PC-3 (cell line): ENCODE measurements at regions of chr3 and their contacts with region 1.

Region 1: GRCh38 chr3:183385698-183386613 is 42.5 kb downstream of the MCF2L2 start:
- DNase-seq: peak; percentile 86
- ATAC-seq: peak; percentile 73
- H3K4me3 ChIP-seq: no peak overlapping the region
- H3K27ac ChIP-seq: no peak overlapping the region
- H3K4me1 ChIP-seq: peaks cover 24% of the 10 kb centered on the region
- H3K27me3 ChIP-seq: no peaks in the 10 kb centered on the region
- CTCF ChIP-seq: peak; percentile 91

Region 2: GRCh38 chr3:182713743-182714517 is 672.0 kb before region 1 on chr3:
- CTCF ChIA-PET with region 1: no interaction called
- POLR2A ChIA-PET with region 1: no interaction called
- intact Hi-C with region 1: loop called (anchors 1 kb)
- DNase-seq: peak; percentile 81
- ATAC-seq: peak; percentile 72
- H3K4me3 ChIP-seq: no peak overlapping the region
- H3K27ac ChIP-seq: no peak overlapping the region
- H3K4me1 ChIP-seq: 0 out of 2 replicates have a peak, but pooled peaks cover 3% of the 10 kb centered on the region
- H3K27me3 ChIP-seq: no peaks in the 10 kb centered on the region
- CTCF ChIP-seq: peak; percentile 74

Region 3: DNA sequence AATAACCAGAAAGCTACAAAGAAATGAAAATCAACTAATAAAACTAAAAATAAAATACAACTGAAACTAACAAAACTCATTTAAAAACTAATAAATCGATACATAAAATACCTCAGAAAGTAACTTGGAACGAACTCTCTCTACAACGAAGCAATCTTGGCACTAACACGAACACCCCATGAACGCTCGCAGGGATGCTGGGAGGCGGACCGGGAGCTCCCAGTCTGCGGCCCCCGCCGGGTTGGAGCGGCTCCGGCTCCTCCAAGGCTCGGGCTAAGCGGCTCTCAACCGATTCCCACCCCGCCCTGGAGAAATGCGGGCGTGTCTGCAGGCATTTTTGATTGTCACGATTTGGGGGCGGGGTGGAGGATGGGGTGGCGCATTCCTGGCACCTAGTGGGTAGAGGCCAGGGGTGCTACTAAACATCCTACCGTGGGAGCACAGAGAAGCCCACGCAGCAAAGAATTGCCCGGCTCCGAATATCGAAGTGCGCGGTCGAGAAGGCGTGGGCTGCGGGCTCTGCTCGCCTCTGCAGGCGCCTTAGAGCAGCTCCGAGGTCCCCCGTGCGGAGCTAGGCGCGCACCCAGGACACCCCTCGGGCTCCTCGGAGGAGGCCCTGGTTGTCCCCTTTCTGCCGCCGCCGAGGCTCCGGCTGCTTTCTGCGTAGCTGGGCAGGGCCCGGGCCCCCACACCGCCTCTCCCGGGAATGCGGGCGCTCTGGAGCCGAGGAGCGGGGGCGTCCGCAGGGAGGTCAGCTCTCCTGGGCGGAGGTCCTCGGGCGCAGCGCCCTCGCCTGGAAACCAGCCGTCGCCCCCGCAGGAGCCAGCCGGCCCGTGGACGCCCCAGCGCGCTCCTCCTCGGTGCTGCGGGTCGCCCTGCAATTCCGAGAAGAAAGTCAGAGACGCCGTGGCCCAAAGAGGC is 207.1 kb before region 1 on chr3:
- CTCF ChIA-PET with region 1: interaction called, 55 read pairs
- POLR2A ChIA-PET with region 1: no interaction called
- intact Hi-C with region 1: loop called (anchors 1 kb)
- DNase-seq: peak; percentile 70
- ATAC-seq: peak; percentile 61
- H3K4me3 ChIP-seq: peak overlapping the region; percentile 85
- H3K27ac ChIP-seq: no peak overlapping the region
- H3K4me1 ChIP-seq: peaks cover 17% of the 10 kb centered on the region; the same call in 1 of the 2 replicates
- H3K27me3 ChIP-seq: no peaks in the 10 kb centered on the region
- CTCF ChIP-seq: peak; percentile 60

Region 4: GRCh38 chr3:183252973-183253901 is 132.7 kb before region 1 on chr3 and contains the start of gene B3GNT5:
- CTCF ChIA-PET with region 1: no interaction called
- POLR2A ChIA-PET with region 1: interaction called, 3 read pairs
- intact Hi-C with region 1: loop called (anchors 1 kb)
- DNase-seq: peak; percentile 75
- ATAC-seq: peak; percentile 53
- H3K4me3 ChIP-seq: peak within 1 kb of the TSS; percentile 89
- H3K27ac ChIP-seq: peak within 1 kb of the TSS; percentile 88
- H3K4me1 ChIP-seq: peaks cover 34% of the 10 kb centered on the region
- H3K27me3 ChIP-seq: no peaks in the 10 kb centered on the region
- CTCF ChIP-seq: no peak
- total RNA-seq, gene B3GNT5: 22.9 and 29.2 TPM in 2 replicates

Region 5: GRCh38 chr3:183447206-183448001 is 61.4 kb after region 1 on chr3:
- CTCF ChIA-PET with region 1: no interaction called
- POLR2A ChIA-PET with region 1: no interaction called
- intact Hi-C with region 1: no loop called
- DNase-seq: peak; percentile 90
- ATAC-seq: peak; percentile 88
- H3K4me3 ChIP-seq: peak overlapping the region; percentile 99
- H3K27ac ChIP-seq: no peak overlapping the region
- H3K4me1 ChIP-seq: peaks cover 15% of the 10 kb centered on the region
- H3K27me3 ChIP-seq: no peaks in the 10 kb centered on the region
- CTCF ChIP-seq: peak; percentile 28; the same call in 1 of the 2 replicates

Region 6: DNA sequence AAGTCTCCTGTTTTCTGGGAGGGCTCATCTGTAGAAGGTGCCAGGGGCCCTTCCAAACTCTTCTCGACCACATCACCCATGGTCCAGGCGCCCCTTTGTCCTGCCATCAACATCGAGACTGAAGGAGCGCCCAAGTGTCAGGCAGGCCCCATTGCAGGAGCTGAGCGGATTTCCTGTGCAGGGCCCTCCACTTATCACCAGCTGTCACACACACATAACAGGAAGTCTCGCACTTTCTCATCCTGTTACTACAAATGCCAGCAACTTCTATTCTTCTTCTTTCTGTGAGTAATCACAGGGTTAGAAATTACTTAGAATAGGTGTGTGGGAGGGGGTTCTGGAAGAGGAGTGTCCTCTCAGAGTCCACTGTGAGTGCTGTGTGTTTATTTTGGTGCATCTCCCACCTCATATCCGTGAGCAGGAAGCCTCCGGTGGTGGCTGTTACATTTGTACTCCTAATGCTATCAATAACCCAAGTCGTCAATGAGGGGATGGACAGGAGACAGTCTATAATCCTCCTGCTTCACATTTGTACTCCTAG is 169.7 kb after region 1 on chr3 and contains the start of gene KLHL6:
- CTCF ChIA-PET with region 1: no interaction called
- POLR2A ChIA-PET with region 1: no interaction called
- intact Hi-C with region 1: no loop called
- DNase-seq: no peak
- ATAC-seq: no peak
- H3K4me3 ChIP-seq: no peak within 1 kb of the TSS
- H3K27ac ChIP-seq: no peak within 1 kb of the TSS
- H3K4me1 ChIP-seq: no peaks in the 10 kb centered on the region
- H3K27me3 ChIP-seq: no peaks in the 10 kb centered on the region
- CTCF ChIP-seq: no peak
- total RNA-seq, gene KLHL6: not detected in 2 replicates

Region 7: DNA sequence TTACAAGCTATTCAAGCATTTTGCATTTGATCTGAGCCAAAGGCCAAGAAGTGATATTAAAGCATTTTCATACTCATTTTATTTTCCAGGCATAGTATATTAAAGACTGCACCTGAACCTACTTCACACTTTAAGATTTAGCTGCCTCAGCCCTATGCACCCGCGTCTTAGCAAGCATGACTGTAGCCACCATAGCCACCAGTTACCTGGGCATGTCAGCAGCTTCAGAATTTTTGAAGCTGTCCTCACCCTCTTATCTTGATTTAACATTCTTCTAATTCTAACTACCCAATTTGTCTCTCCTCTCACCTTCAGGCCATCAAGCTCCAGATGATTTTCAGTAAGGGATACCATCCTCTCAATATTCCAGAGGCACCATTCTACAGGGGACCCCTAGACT is 208.7 kb after region 1 on chr3:
- CTCF ChIA-PET with region 1: no interaction called
- POLR2A ChIA-PET with region 1: no interaction called
- intact Hi-C with region 1: no loop called
- DNase-seq: no peak
- ATAC-seq: no peak
- H3K4me3 ChIP-seq: no peak overlapping the region
- H3K27ac ChIP-seq: no peak overlapping the region
- H3K4me1 ChIP-seq: no peaks in the 10 kb centered on the region
- H3K27me3 ChIP-seq: no peaks in the 10 kb centered on the region
- CTCF ChIP-seq: no peak

Region 8: DNA sequence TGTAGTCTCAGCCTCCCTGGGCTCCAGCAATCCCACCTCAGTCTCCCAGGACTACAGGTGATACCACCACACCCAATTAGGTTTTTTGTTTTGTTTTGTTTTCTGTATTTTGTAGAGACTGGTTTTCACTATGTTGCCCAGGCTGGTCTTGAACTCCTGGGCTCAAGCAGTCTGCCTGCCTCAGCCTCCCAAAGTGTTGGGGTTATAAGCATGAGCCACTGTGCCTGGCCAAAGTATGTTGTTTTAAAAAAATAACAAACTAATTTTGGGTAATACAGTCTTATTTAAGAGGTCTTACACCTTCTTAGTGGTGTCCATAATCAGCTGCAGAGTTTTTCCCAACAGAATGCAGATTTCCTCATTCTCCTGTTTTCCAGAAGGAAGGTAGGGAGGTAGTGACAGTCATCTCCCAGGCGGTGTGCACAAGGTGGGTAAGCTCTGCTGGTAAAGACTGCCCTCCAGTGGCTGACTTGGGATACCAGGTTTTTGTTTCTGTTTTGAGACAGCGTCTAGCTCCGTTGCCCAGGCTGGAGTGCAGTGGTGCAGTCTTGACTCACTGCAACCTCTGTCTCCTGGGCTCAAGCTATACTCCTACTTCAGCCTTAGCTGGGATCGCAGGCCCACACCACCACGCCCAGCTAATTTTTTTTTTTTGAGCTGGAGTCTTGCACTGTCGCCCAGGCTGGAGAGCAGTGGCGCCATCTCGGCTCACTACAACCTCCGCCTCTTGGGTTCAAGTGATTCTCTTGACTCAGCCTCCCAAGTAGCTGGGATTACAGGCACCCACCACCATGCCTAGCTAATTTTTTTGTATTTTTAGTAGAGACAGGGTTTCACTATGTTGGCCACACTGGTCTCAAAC is 381.0 kb after region 1 on chr3:
- CTCF ChIA-PET with region 1: no interaction called
- POLR2A ChIA-PET with region 1: no interaction called
- intact Hi-C with region 1: loop called (anchors 5 kb)
- DNase-seq: peak; percentile 86
- ATAC-seq: peak; percentile 93
- H3K4me3 ChIP-seq: no peak overlapping the region
- H3K27ac ChIP-seq: no peak overlapping the region
- H3K4me1 ChIP-seq: no peaks in the 10 kb centered on the region
- H3K27me3 ChIP-seq: no peaks in the 10 kb centered on the region
- CTCF ChIP-seq: peak; percentile 86